ENCODE measurements at regions of chr14 and their contacts with region 1.

Region 1: GRCh38 chr14:100362311-100362927 is 39.3 kb downstream of the SLC25A47 start:
- DNase-seq: no peak
- H3K4me3 Mint-ChIP-seq: no peak overlapping the region
- H3K27ac Mint-ChIP-seq: no peak overlapping the region
- H3K4me1 Mint-ChIP-seq: peaks cover 40% of the 10 kb centered on the region
- H3K27me3 Mint-ChIP-seq: no peaks in the 10 kb centered on the region

Region 2: DNA sequence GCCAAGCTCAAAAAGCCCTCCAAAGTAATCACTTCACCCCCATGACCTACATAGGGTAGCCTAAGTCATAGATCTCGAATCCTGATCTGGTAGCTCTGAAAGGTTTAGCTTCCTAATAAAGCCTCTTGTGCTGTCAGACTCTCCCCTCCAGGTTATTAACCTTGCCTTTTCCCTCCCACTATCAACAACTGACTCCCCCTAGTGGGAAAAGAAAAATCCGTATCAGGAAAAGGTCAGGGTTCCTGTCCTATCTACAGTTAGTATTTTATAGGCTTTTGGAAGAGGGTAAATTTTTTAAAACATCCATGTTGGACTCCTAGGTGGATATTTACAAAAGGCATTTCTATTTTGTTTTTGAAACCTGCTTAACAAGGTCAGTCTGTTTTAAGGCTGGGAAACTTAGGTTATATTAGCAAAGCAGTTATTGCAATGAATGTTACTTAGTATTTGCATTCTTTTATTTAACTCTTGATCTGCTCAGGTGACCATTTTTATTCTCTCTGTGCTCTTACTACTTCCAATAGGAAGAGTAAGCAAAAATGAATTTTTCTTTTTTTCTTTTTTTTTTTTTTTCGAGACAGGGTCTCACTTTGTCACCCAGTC is 115.5 kb before region 1 on chr14:
- CTCF ChIA-PET with region 1: no interaction called
- POLR2A ChIA-PET with region 1: no interaction called
- DNase-seq: peak; percentile 17
- H3K4me3 Mint-ChIP-seq: no peak overlapping the region
- H3K27ac Mint-ChIP-seq: peak overlapping the region; percentile 39
- H3K4me1 Mint-ChIP-seq: peaks cover 69% of the 10 kb centered on the region
- H3K27me3 Mint-ChIP-seq: no peaks in the 10 kb centered on the region

Region 3: GRCh38 chr14:100342216-100342615 is 20.2 kb before region 1 on chr14:
- CTCF ChIA-PET with region 1: no interaction called
- POLR2A ChIA-PET with region 1: no interaction called
- DNase-seq: no peak
- H3K4me3 Mint-ChIP-seq: no peak overlapping the region
- H3K27ac Mint-ChIP-seq: peak overlapping the region; percentile 31
- H3K4me1 Mint-ChIP-seq: peaks cover 26% of the 10 kb centered on the region
- H3K27me3 Mint-ChIP-seq: no peaks in the 10 kb centered on the region

Region 4: GRCh38 chr14:100376751-100377171 is 14.3 kb after region 1 on chr14:
- CTCF ChIA-PET with region 1: interaction called, 10 read pairs
- POLR2A ChIA-PET with region 1: no interaction called
- DNase-seq: no peak
- H3K4me3 Mint-ChIP-seq: peak overlapping the region; percentile 95
- H3K27ac Mint-ChIP-seq: peak overlapping the region; percentile 97
- H3K4me1 Mint-ChIP-seq: peaks cover 52% of the 10 kb centered on the region
- H3K27me3 Mint-ChIP-seq: no peaks in the 10 kb centered on the region

Region 5: GRCh38 chr14:100988411-100988900 is 626.0 kb after region 1 on chr14:
- CTCF ChIA-PET with region 1: no interaction called
- POLR2A ChIA-PET with region 1: no interaction called
- DNase-seq: no peak
- H3K4me3 Mint-ChIP-seq: no peak overlapping the region
- H3K27ac Mint-ChIP-seq: no peak overlapping the region
- H3K4me1 Mint-ChIP-seq: no peaks in the 10 kb centered on the region
- H3K27me3 Mint-ChIP-seq: peaks cover 3% of the 10 kb centered on the region